Breast epithelium (tissue), 4 donors: ENCODE measurements at regions of chr16 and their contacts with region 1.

Region 1: GRCh38 chr16:84617791-84618580 is at the start of gene COTL1:
- DNase-seq: peak; percentile 94
- H3K4me3 ChIP-seq: peak within 1 kb of the TSS; percentile 69 to 76 (median 72)
- H3K27ac ChIP-seq: peak within 1 kb of the TSS; percentile 69 to 75
- H3K4me1 ChIP-seq: no peaks in the 10 kb centered on the region
- H3K27me3 ChIP-seq: no peaks in the 10 kb centered on the region
- CTCF ChIP-seq: no peak
- POLR2A ChIP-seq: no peak
- total RNA-seq, gene COTL1: 22.0 to 49.2 (median 44.6) TPM

Region 2: DNA sequence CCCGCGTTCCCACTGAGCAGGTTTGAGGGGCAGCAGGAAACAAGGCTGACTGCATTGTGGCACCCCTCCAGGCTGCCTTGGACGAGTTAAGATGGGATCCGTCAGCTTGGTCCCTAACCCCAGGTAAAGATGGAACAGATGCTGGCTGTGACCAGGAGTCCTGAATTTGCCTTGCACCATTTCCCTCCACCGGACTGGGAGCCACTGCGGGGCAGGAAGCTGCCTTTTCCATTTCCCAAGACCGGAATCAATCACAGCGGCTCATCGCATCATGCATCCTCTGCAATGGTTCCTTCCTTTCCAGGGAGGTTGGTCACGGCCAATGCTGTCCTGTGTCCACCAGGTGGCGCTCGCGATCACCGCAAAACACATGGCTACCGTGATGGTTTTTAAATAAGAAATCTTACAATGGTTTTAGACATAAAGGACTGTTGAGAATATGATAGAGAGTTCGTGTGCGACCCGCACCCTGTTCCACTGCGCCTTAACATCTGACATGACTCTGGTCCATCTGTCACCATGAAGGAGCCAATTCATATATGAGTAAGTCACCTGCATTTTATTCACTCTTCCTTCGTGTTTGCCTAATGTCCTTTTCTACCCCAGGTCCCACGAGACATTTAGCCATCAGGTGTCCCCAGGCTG is 106.7 kb before region 1 on chr16:
- intact Hi-C with region 1: loop called (anchors 10 kb)
- DNase-seq: peak; percentile 76 to 90
- H3K4me3 ChIP-seq: peak overlapping the region in 1 of 3 donors; percentile 16
- H3K27ac ChIP-seq: no peak overlapping the region
- H3K4me1 ChIP-seq: no peaks in the 10 kb centered on the region
- H3K27me3 ChIP-seq: no peaks in the 10 kb centered on the region
- CTCF ChIP-seq: peak; percentile 91 to 94 (median 94)
- POLR2A ChIP-seq: no peak

Region 3: DNA sequence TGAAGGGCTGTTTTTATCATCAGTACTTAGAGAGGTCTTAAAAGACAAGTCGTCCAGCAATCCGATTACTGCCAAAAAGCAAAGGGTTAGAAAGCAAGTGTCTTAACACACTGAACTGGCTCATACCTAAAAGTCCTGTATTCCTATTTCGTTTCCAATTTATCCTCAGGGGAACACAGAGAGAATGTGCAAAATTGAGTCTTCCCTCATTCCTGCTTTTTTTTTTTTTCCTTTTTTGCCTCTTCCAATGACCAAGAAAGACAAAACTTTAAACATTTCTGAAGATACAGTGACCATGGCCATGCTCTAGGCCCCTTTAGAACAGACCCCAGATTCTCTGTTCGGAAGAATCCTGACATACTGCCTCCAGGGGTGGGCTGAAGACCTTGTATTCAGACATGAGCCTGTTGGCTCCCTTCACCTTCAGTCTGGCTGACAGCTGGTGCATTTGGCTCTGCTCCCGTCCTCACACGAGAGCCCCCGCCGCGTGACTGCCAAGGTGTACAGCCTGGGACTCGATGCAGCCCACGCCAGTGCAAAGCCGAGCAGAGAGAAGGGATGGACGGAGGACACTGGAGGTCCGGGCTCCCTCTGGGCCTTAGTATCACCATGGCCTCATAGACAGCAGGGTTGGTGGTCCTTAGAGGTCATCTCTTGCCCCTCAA is 47.1 kb before region 1 on chr16:
- intact Hi-C with region 1: loop called (anchors 2 kb)
- DNase-seq: no peak
- H3K4me3 ChIP-seq: no peak overlapping the region
- H3K27ac ChIP-seq: no peak overlapping the region
- H3K4me1 ChIP-seq: no peaks in the 10 kb centered on the region
- H3K27me3 ChIP-seq: no peaks in the 10 kb centered on the region
- CTCF ChIP-seq: no peak
- POLR2A ChIP-seq: no peak

Region 4: GRCh38 chr16:84599521-84600202 is 18.3 kb before region 1 on chr16:
- intact Hi-C with region 1: loop called (anchors 1 kb)
- DNase-seq: no peak
- H3K4me3 ChIP-seq: peak overlapping the region in 2 of 3 donors; percentile 32 to 54
- H3K27ac ChIP-seq: peak overlapping the region; percentile 75 to 92
- H3K4me1 ChIP-seq: peaks cover 0 to 7% of the 10 kb centered on the region in 2 donors
- H3K27me3 ChIP-seq: no peaks in the 10 kb centered on the region
- CTCF ChIP-seq: no peak
- POLR2A ChIP-seq: no peak